ENCODE measurements at regions of chr16 and their contacts with region 1.

Region 1: DNA sequence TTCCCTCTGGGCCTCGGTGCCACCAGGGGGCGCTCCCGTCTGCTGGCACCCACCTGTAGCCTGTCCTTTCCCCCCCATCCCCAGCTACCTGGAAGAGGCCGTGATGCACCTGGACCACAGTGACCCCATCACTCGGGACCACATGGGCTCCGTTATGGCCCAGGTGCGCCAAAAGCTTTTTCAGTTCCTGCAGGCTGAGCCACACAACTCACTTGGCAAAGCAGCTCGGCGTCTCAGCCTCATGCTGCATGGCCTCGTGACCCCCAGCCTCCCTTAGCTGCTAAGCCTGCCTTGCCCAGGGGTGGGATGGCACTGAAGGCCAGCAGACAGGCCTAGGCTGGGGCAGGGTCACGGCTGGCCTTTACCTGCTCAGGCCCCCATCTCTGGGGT is 818 bp upstream of the NRN1L start:
- DNase-seq: peak; percentile 57
- H3K4me3 Mint-ChIP-seq: no peak overlapping the region
- H3K27ac Mint-ChIP-seq: peak overlapping the region; percentile 72
- H3K4me1 Mint-ChIP-seq: peaks cover 17% of the 10 kb centered on the region
- H3K27me3 Mint-ChIP-seq: no peaks in the 10 kb centered on the region
- CTCF ChIP-seq: peak; percentile 80

Region 2: DNA sequence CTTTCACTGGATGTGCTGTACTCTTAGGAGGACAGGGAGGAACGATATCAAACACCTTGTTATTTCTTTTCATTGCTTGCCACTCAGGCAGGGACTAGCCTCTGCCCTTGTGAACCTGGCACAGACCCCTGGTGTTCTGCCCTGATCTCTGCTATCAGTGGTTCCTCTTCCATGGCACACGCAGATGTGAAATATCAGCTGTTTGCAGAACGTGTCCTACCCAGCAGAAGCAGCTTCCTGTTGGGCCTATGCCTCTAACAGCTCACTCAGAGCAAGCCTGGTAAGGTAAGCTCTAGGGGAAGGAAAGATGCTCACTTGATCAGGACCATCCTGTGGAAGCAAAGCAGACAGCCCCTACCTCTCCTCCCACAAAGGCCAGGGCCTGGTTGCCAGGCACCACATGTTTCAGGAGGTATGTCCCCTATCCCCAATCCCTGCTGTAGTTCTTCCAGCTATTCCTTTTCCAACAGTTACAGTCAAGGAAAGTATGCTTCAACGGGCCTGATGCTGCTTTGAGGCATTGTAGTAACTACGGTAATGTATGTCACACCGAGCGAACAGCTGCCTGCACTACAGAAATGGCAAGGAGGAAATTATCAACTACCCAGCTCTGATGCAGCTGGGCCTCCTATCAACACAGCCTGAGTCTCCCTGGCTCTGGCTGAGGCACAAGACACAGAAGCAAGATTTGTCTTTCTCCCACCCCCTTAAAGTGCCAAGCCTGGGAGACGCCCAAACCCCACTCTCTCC is 123.5 kb before region 1 on chr16:
- CTCF ChIA-PET with region 1: no interaction called
- POLR2A ChIA-PET with region 1: no interaction called
- intact Hi-C with region 1: no loop called
- DNase-seq: no peak
- H3K4me3 Mint-ChIP-seq: no peak overlapping the region
- H3K27ac Mint-ChIP-seq: no peak overlapping the region
- H3K4me1 Mint-ChIP-seq: peaks cover 7% of the 10 kb centered on the region
- H3K27me3 Mint-ChIP-seq: no peaks in the 10 kb centered on the region
- CTCF ChIP-seq: no peak

Region 3: DNA sequence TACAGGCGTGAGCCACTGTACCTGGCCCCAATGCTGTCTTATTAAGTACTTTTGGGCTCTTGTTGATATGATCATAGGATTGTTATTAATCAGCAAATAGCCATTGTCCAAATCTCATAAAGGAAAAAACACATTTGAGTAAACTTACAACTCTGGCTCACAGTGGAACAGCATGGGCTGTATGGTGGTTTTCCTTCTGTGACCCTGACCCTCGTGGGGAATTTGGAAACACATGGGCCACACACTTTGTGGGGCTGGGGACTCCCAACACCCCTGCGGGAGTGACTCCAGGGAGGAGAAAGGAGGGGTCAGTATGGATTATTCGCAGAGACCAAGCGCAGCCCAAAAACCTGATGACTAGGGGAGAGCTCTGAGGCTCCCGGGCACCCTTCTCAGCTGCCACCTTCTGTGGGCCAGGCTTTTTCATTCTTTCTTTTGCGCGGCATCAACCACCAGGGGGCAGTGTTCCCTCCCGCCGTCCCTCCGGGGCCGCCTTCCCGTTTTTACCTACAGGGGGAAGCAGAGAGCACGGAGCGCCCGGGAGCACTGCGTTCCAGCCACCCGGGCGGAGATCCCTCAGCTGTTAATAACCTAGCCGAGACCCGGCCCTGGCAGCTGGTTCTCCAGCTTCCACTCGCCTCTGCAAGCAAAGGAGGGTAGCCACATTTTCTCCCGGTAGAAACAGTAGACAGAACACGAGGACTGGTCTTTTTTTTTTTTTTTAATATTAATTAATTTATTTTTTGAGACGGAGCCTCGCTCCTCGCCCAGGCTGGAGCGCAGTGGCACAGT is 67.4 kb before region 1 on chr16:
- CTCF ChIA-PET with region 1: interaction called, 12 read pairs
- POLR2A ChIA-PET with region 1: interaction called, 3 read pairs
- intact Hi-C with region 1: no loop called
- DNase-seq: peak; percentile 75
- H3K4me3 Mint-ChIP-seq: no peak overlapping the region
- H3K27ac Mint-ChIP-seq: no peak overlapping the region
- H3K4me1 Mint-ChIP-seq: no peaks in the 10 kb centered on the region
- H3K27me3 Mint-ChIP-seq: no peaks in the 10 kb centered on the region
- CTCF ChIP-seq: peak; percentile 98

Region 4: DNA sequence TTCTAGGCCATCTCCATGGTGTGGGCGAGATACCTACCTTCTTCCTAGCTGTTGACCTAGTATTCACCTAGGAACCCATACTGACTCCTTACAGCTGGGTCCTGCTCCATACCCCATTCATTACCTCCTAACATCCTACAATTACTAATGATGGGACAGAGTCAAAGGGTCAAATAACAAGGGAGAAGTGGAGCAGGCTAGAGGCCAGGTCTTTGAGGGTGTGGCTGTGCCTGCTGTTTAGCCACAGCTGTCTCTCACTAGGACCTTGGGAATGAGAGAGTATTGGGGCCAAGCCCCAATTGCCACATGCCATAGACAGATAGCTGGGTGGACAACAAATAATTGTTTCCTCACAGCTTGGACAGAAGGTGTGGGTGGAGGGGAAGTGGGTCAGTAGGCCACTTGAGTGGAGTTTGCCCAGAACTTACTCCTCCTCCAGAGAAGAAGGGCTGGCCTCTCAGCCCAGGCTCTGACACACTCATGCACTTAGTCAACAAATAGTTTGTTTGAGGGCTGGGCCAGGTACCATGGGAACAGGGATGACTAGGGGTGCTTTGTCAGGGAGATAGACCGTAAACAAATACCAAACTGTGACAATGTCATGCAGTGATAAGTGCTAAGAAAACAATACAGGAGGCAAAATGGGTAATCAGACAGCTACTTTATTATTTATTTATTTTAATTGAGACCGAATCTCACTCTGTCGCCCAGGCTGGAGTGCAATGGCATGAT is 26.2 kb before region 1 on chr16:
- CTCF ChIA-PET with region 1: interaction called, 12 read pairs
- POLR2A ChIA-PET with region 1: interaction called, 9 read pairs
- intact Hi-C with region 1: no loop called
- DNase-seq: peak; percentile 90
- H3K4me3 Mint-ChIP-seq: peak overlapping the region; percentile 54
- H3K27ac Mint-ChIP-seq: peak overlapping the region; percentile 99
- H3K4me1 Mint-ChIP-seq: peaks cover 38% of the 10 kb centered on the region
- H3K27me3 Mint-ChIP-seq: no peaks in the 10 kb centered on the region
- CTCF ChIP-seq: no peak

Region 5: GRCh38 chr16:67872786-67873537 is 10.9 kb before region 1 on chr16 and contains the start of gene EDC4:
- CTCF ChIA-PET with region 1: interaction called, 44 read pairs
- POLR2A ChIA-PET with region 1: interaction called, 18 read pairs
- intact Hi-C with region 1: no loop called
- DNase-seq: peak; percentile 71
- H3K4me3 Mint-ChIP-seq: peak within 1 kb of the TSS; percentile 89
- H3K27ac Mint-ChIP-seq: peak within 1 kb of the TSS; percentile 94
- H3K4me1 Mint-ChIP-seq: peaks cover 34% of the 10 kb centered on the region
- H3K27me3 Mint-ChIP-seq: no peaks in the 10 kb centered on the region
- CTCF ChIP-seq: no peak
- total RNA-seq, gene EDC4: 50.9 and 51.3 TPM in 2 replicates

Region 6: DNA sequence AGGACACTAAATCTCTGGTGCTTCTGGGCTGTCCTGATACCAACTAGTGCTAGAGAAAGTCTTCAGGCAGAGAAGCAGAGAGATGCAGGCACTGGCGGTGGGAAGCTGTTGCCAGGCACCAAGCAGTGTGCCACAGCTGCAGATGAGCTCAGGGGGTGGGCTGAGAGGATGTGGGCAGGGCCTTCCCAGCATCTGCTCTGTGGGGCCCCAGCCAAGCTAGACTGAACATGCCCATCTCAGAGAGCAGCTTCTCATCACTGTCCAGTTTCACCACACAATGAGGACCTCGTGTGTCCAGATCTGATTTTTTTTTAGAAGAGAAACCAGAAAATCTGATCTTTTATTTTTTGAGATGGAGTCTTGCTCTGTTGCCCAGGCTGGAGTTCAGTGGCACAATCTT is 26.3 kb after region 1 on chr16:
- CTCF ChIA-PET with region 1: interaction called, 17 read pairs
- POLR2A ChIA-PET with region 1: interaction called, 4 read pairs
- intact Hi-C with region 1: no loop called
- DNase-seq: peak; percentile 39
- H3K4me3 Mint-ChIP-seq: no peak overlapping the region
- H3K27ac Mint-ChIP-seq: no peak overlapping the region
- H3K4me1 Mint-ChIP-seq: no peaks in the 10 kb centered on the region
- H3K27me3 Mint-ChIP-seq: no peaks in the 10 kb centered on the region
- CTCF ChIP-seq: no peak

Region 7: GRCh38 chr16:67928561-67929364 is 44.9 kb after region 1 on chr16:
- CTCF ChIA-PET with region 1: interaction called, 67 read pairs
- POLR2A ChIA-PET with region 1: no interaction called
- intact Hi-C with region 1: loop called (anchors 1 kb)
- DNase-seq: peak; percentile 75
- H3K4me3 Mint-ChIP-seq: no peak overlapping the region
- H3K27ac Mint-ChIP-seq: no peak overlapping the region
- H3K4me1 Mint-ChIP-seq: peaks cover under 1% of the 10 kb centered on the region
- H3K27me3 Mint-ChIP-seq: no peaks in the 10 kb centered on the region
- CTCF ChIP-seq: peak; percentile 86

Region 8: GRCh38 chr16:68085259-68086071 is 201.6 kb after region 1 on chr16 and contains the start of gene NFATC3:
- CTCF ChIA-PET with region 1: no interaction called
- POLR2A ChIA-PET with region 1: no interaction called
- intact Hi-C with region 1: no loop called
- DNase-seq: peak; percentile 94
- H3K4me3 Mint-ChIP-seq: peak within 1 kb of the TSS; percentile 80
- H3K27ac Mint-ChIP-seq: peak within 1 kb of the TSS; percentile 35
- H3K4me1 Mint-ChIP-seq: peaks cover 23% of the 10 kb centered on the region
- H3K27me3 Mint-ChIP-seq: no peaks in the 10 kb centered on the region
- CTCF ChIP-seq: no peak
- total RNA-seq, gene NFATC3: 18.5 and 24.1 TPM in 2 replicates

Measured in MCF 10A (cell line).